ENCODE measurements at regions of chr7 and their contacts with region 1.

Region 1: DNA sequence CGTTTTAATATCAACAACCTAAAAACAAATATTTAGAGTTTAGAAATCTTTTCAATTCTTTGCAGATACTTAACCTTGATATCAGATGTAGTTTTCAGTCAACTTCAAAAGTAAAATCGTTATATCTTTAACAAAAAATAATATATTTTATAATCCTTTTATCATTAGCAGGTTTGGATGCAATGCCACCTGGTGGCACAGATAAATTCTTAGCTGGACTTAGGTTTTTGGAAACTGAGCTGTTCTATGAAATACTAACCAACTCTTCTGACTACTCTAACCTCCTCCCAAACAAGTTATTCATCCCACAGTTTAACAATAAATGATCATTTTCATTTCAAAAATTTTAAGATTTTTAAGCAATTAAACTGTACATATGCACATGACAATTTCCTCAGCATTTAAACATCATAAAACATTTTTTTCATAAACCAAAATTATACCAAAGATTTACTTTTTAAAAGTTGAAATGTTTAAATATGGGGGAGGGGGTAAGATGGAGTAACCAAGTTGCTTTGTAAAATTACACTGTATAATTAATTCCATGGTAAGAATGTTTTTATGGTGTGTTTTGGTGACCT is 56.9 kb downstream of the HIBADH start:
- DNase-seq: peak; percentile 28
- ATAC-seq: peak; percentile 76
- H3K4me3 ChIP-seq: peak overlapping the region in 1 of 2 experiments; percentile 7; a peak in 2 of 4 replicates
- H3K27ac ChIP-seq: peak overlapping the region; percentile 5; the same call in 1 of the 2 replicates
- H3K4me1 ChIP-seq: peaks cover 50% of the 10 kb centered on the region
- H3K27me3 ChIP-seq: no peaks in the 10 kb centered on the region
- CTCF ChIP-seq: peak; percentile 75; the same call in 1 of the 2 replicates

Region 2: GRCh38 chr7:27224983-27225934 is 380.5 kb before region 1 on chr7:
- CTCF ChIA-PET with region 1: interaction called, 13 read pairs
- POLR2A ChIA-PET with region 1: no interaction called
- in situ Hi-C with region 1: no loop called
- intact Hi-C with region 1: no loop called
- DNase-seq: no peak
- ATAC-seq: peak; percentile 35; the same call in 1 of the 2 replicates
- H3K4me3 ChIP-seq: 0 out of 4 replicates have a peak overlapping the region, but pooled peaks of 1 of the 2 experiments have one; percentile 6
- H3K27ac ChIP-seq: no peak overlapping the region
- H3K4me1 ChIP-seq: peaks cover 3% of the 10 kb centered on the region; the same call in 1 of the 2 replicates
- H3K27me3 ChIP-seq: peaks cover 20% of the 10 kb centered on the region
- CTCF ChIP-seq: no peak

Region 3: DNA sequence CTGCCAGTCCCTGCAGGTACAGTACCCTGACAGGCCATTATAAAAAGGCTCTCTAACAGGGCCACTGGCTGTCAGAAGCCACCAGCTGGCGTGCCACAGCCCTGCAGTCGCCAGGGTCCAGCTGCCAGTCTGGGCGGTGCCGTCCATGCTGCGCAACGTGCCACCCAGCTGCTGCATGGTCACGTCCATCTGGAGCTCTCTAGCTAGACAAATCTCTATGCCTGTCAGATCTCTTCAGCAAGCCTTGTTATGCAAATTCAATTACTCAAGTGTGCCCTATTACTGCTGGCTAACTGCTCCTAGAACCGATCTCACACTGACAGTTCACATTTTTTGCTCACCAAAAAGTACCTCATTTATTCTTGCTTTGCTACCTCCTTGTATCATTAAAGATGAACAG is 19.0 kb before region 1 on chr7:
- CTCF ChIA-PET with region 1: interaction called, 12 read pairs
- POLR2A ChIA-PET with region 1: no interaction called
- in situ Hi-C with region 1: no loop called
- intact Hi-C with region 1: no loop called
- DNase-seq: no peak
- ATAC-seq: peak; percentile 62
- H3K4me3 ChIP-seq: no peak overlapping the region
- H3K27ac ChIP-seq: no peak overlapping the region
- H3K4me1 ChIP-seq: no peaks in the 10 kb centered on the region
- H3K27me3 ChIP-seq: no peaks in the 10 kb centered on the region
- CTCF ChIP-seq: no peak

Region 4: GRCh38 chr7:27992755-27993493 is 387.1 kb after region 1 on chr7:
- CTCF ChIA-PET with region 1: no interaction called
- POLR2A ChIA-PET with region 1: interaction called, 10 read pairs
- in situ Hi-C with region 1: no loop called
- intact Hi-C with region 1: no loop called
- DNase-seq: no peak
- ATAC-seq: no peak
- H3K4me3 ChIP-seq: no peak overlapping the region
- H3K27ac ChIP-seq: no peak overlapping the region
- H3K4me1 ChIP-seq: peaks cover 28% of the 10 kb centered on the region
- H3K27me3 ChIP-seq: no peaks in the 10 kb centered on the region
- CTCF ChIP-seq: no peak

Measured in Panc1 (cell line).